ENCODE measurements at regions of chr1 and their contacts with region 1.

Region 1: DNA sequence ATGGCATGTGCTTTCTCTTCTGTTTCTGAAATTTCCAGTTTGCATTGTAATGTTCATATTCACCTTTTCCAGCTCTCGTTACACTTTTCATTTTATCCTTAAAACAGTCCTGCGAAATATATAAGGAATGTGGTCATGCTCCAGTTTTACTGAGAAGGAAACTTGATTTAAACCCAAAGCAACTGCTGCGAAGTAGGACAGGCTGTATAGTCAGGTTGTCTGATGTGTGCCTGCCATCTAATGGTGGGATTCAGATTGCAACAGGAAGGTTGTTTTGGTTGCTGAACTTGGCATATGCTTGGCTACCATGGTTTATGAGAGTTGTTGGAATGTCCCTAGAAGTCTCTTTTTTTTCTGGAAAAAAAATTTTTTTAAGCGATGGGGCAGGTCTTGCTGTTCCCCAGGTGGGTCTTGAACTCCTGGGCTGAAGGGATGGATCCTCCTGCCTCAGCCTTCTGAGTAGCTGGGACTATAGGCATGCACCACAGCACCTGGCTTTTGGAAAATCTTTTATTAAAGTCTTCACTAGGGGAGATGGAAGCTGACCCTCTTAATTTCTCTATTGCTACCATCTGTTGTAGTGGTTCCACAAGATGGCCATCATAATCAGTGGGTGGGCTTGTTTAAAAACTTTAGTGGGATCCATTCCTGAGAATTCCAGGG is 86.9 kb downstream of the UCK2 start:
- DNase-seq: peak; percentile 31 to 57
- ATAC-seq: peak; percentile 87 to 92
- H3K4me3 ChIP-seq: no peak overlapping the region
- H3K27ac ChIP-seq: no peak overlapping the region
- H3K4me1 ChIP-seq: peaks cover 0 to 15% of the 10 kb centered on the region in 2 donors
- H3K27me3 ChIP-seq: no peaks in the 10 kb centered on the region
- CTCF ChIP-seq: peak; percentile 82 to 92 (median 89)
- POLR2A ChIP-seq: no peak

Region 2: DNA sequence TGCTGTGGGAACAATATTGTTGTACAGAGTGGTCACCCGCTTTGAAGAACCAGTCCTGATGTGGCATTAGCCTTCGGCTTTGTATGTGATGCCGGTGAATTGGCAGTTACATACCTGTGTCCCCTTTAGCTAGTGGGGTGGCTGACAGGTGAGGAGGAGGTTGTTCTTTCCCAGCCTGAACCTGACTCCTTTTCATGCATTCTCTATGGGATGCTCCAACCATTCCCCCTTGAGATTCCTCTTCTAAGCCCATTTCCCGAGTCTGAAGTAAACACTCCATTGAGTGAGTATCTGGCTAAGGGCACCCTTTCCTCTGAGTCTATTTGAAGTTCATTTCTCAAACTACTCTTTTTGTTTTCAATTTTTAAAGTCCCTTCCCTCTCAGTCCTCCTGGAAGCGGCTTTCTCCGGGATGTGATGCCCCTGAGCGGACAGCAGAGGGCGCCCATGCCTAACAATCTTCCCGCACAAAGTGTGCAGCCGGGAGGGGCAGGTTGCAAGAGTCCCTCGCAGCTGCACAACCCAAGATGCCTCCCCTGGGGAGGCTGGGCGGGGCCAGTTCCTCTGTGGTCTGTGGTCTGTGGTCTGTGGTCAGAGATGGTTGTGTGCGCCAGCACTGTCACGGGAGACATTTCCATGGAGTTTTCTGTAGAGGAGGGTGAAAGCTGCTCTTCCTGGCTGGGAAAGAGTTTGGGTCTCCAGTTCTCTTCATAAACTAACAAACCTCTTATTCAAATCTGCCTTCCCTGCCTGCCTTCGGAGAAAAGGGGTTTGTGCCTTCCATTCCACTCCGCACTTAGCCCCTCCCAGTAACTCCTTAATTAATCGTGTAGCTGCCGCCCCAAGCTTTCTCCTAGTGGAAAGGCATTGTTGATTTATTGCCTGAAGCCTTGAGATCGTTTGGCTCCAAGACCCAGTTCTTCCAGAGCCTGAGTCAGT is 521.4 kb before region 1 on chr1:
- in situ Hi-C with region 1: loop called (anchors 10 kb)
- intact Hi-C with region 1: loop called (anchors 5 kb)
- DNase-seq: peak; percentile 68 to 77
- ATAC-seq: peak; percentile 79 to 86
- H3K4me3 ChIP-seq: peak overlapping the region in 2 of 4 donors; percentile 8 to 17
- H3K27ac ChIP-seq: no peak overlapping the region
- H3K4me1 ChIP-seq: peaks cover 6 to 9% of the 10 kb centered on the region in 2 donors
- H3K27me3 ChIP-seq: no peaks in the 10 kb centered on the region
- CTCF ChIP-seq: peak; percentile 87 to 97 (median 91)
- POLR2A ChIP-seq: no peak

Region 3: DNA sequence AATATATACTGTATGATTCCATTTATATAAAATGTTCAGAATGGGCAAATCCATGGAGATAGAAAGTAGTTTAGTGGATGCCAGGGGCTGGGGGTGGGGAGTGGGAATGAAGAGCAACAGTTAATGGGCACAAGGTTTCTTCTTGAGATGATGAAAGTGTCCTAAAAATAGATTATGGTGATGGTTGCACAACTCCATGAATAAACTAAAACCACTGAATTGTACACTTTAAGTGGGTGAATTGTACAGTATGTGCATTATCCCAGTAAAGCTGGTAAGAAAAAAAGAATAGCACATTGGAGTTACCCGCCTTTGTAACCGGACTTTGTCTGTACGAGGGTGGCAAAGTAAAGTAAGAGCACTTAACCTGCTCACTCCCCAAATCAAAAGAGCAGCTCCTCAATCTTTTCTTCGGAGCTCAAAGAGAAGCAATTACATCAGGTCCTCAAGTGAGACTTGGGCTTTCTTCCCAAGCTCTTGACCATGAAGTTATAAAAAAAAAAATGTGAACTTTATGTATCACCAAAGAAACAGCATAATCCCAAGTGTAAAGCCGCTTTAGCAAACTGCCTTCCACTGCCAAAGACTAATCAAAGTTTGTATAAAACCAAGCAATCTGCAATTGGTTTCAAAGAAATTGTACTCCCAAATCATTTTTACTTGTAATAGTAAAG is 248.0 kb before region 1 on chr1:
- in situ Hi-C with region 1: no loop called
- intact Hi-C with region 1: no loop called
- DNase-seq: no peak
- ATAC-seq: peak; percentile 85 to 90
- H3K4me3 ChIP-seq: no peak overlapping the region
- H3K27ac ChIP-seq: peak overlapping the region; percentile 22 to 58 (median 49)
- H3K4me1 ChIP-seq: peaks cover 9 to 13% of the 10 kb centered on the region in 2 donors
- H3K27me3 ChIP-seq: no peaks in the 10 kb centered on the region
- CTCF ChIP-seq: no peak
- POLR2A ChIP-seq: no peak

Region 4: DNA sequence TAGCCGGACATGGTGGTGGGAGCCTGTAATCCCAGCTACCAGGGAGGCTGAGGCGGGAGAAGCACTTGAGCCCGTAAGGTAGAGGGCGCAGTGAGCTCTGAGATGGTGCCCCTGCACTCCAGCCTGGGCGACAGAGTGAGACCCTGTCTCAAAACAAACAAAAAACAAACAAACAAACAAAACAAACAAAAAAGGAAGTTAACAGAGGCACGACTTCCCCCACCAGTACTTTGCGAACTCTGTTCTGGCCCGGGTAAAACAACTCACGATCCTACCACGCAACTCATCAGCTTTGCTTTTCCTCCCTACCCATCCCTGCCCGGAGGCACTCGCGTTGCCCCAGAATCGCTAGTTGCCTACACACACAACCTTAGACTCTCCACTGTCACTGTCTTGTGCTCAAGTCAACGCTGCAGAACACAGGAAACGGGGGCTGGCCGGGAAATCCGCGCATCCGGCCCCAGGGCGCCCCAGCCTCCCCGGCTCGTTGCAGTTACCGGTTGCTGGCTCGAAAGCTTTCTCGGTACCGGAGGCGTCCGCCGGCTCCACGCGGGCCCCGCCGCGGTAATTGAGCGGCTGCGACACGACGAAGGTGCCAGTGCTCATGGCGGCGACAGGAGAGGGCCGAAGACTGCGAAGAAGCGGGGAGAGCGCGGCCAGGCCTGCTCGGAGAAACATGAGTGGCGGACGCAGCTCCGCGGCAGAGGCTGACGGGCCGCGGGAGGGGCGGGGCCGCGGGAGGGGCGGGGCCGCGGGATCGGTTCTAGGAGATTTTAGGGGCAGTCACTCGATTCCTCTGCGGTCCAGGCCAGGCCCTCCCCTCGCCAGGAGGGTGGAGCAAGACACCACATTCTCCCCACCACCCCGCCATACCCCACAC is 216.1 kb before region 1 on chr1 and contains the start of gene ALDH9A1:
- in situ Hi-C with region 1: no loop called
- intact Hi-C with region 1: loop called (anchors 5 kb)
- DNase-seq: peak; percentile 68 to 87
- ATAC-seq: peak; percentile 90 to 92
- H3K4me3 ChIP-seq: peak within 1 kb of the TSS; percentile 91 to 96 (median 94)
- H3K27ac ChIP-seq: peak within 1 kb of the TSS; percentile 97 to 98 (median 98)
- H3K4me1 ChIP-seq: peaks cover 18 to 27% of the 10 kb centered on the region in 2 donors
- H3K27me3 ChIP-seq: no peaks in the 10 kb centered on the region
- CTCF ChIP-seq: peak in 2 of 5 experiments; percentile 49 to 52
- POLR2A ChIP-seq: peak; percentile 75 to 90
- total RNA-seq, gene ALDH9A1: 46.4 to 91.5 (median 63.3) TPM

Region 5: GRCh38 chr1:165768513-165769394 is 145.5 kb before region 1 on chr1 and contains the start of gene TMCO1:
- in situ Hi-C with region 1: loop called in 2 of 4 experiments (anchors 25 kb)
- intact Hi-C with region 1: loop called (anchors 2 kb)
- DNase-seq: peak; percentile 96 to 97
- ATAC-seq: peak; percentile 100
- H3K4me3 ChIP-seq: peak within 1 kb of the TSS; percentile 60 to 95 (median 86)
- H3K27ac ChIP-seq: peak within 1 kb of the TSS; percentile 86 to 90 (median 86)
- H3K4me1 ChIP-seq: peaks cover 23 to 33% of the 10 kb centered on the region in 2 donors
- H3K27me3 ChIP-seq: no peaks in the 10 kb centered on the region
- CTCF ChIP-seq: peak; percentile 22 to 34 (median 33)
- POLR2A ChIP-seq: peak; percentile 57 to 68
- total RNA-seq, gene TMCO1: 28.7 to 46.9 (median 36.8) TPM

Region 6: DNA sequence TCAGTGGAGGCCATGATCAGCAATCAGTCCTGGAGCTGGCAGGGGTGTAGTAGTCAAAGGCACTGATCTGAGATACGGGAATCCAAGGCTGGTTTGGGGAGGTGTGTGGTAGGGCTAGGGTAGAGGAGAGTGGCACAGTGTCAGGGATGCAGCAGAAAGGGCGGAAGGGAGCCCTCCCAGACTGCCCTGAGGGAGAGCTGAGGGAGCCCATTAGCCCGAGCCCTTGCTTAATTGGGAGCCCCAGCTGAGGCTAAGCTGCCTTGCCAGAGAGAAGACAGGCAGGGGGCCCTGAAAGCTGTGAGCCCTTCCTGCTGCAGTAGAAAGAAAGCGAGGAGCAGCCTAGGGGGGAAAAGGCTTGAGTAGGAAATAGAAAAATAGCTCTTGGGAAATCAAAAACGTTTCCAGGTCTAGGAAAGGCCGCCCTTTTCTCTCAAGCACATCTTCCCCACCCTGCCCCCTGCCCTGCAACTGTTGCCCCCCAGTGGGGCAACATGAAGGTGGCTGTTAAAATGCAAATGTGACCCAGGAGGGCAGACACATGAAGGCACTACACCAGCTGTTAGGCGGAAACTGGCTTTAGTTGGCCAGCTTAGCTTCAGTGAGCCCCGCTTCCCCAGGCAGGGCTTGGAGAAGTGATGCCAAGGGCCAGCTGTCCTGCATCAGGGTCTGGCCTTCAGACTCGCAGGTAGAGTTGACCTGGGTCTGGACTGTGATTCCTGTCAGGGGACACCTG is 19.3 kb after region 1 on chr1:
- in situ Hi-C with region 1: no loop called
- intact Hi-C with region 1: no loop called
- DNase-seq: no peak
- ATAC-seq: no peak
- H3K4me3 ChIP-seq: no peak overlapping the region
- H3K27ac ChIP-seq: no peak overlapping the region
- H3K4me1 ChIP-seq: no peaks in the 10 kb centered on the region
- H3K27me3 ChIP-seq: no peaks in the 10 kb centered on the region
- CTCF ChIP-seq: no peak
- POLR2A ChIP-seq: no peak

Measured in gastrocnemius medialis (tissue), 4 donors.